ENCODE measurements at regions of chr12 and their contacts with region 1.

Region 1: DNA sequence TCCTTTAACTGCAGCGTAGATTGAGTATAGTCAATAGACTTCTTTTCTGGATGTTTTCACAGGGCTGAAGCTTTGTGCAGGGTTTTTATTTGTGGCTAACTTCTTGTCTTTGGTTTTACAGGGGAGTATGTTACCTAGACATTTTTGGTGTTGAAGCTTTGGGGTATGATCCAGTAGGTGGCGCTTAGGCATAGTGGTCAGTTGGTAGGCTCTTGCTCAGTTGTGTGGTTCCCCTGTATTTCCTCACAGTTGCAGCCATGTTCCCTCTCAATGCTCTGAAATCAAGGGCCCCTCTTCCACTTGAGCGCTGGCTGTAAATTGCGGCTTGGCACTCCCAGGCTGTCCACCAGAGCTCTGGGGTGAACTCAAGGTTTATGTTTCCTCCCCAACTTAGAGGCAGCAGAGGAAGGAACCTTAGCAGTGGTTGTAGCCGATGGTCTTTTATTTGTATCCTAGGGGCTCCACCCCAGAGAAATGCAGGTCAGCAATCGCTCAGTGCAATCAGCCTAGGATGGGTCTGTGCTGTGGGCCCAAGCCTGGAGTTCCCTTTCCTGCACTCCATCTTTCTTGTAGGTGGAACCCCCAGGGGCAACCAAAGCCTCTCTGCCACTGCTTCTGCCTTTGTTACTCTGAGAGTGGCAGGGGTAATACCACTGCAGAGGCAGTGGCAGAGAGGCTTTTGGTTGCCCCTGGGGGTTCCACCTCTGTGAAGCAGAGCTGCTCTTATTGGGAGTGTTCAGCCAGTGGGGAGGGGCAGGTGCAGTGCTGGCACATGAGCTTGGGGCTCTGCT is 55.1 kb downstream of the CMAS start:
- DNase-seq: peak in 9 of 14 experiments; percentile 10 to 76 (median 33)
- ATAC-seq: peak; percentile 48
- H3K4me3 ChIP-seq: no peak overlapping the region
- H3K4me3 Mint-ChIP-seq: no peak overlapping the region
- H3K27ac ChIP-seq: no peak overlapping the region
- H3K27ac Mint-ChIP-seq: no peak overlapping the region
- H3K4me1 ChIP-seq: peaks cover 15% of the 10 kb centered on the region
- H3K4me1 Mint-ChIP-seq: peaks cover 14% of the 10 kb centered on the region
- H3K27me3 ChIP-seq: no peaks in the 10 kb centered on the region
- H3K27me3 Mint-ChIP-seq: no peaks in the 10 kb centered on the region
- CTCF ChIP-seq: peak; percentile 66

Region 2: GRCh38 chr12:22164139-22164538 is 63.0 kb after region 1 on chr12:
- CTCF ChIA-PET with region 1: no interaction called
- POLR2A ChIA-PET with region 1: no interaction called
- intact Hi-C with region 1: loop called (anchors 5 to 10 kb)
- DNase-seq: peak in 4 of 14 experiments; percentile 30 to 71 (median 46)
- ATAC-seq: peak; percentile 66
- H3K4me3 ChIP-seq: peak overlapping the region; percentile 6
- H3K4me3 Mint-ChIP-seq: peak overlapping the region; percentile 57
- H3K27ac ChIP-seq: peak overlapping the region; percentile 5 to 57
- H3K27ac Mint-ChIP-seq: peak overlapping the region; percentile 78
- H3K4me1 ChIP-seq: peaks cover 23% of the 10 kb centered on the region
- H3K4me1 Mint-ChIP-seq: peaks cover 64% of the 10 kb centered on the region
- H3K27me3 ChIP-seq: no peaks in the 10 kb centered on the region
- H3K27me3 Mint-ChIP-seq: no peaks in the 10 kb centered on the region
- CTCF ChIP-seq: no peak

Region 3: GRCh38 chr12:22173177-22173576 is 72.0 kb after region 1 on chr12:
- CTCF ChIA-PET with region 1: no interaction called
- POLR2A ChIA-PET with region 1: no interaction called
- intact Hi-C with region 1: loop called (anchors 5 to 10 kb)
- DNase-seq: peak in 2 of 14 experiments; percentile 15 to 17
- ATAC-seq: no peak
- H3K4me3 ChIP-seq: no peak overlapping the region
- H3K4me3 Mint-ChIP-seq: no peak overlapping the region
- H3K27ac ChIP-seq: no peak overlapping the region
- H3K27ac Mint-ChIP-seq: no peak overlapping the region
- H3K4me1 ChIP-seq: no peaks in the 10 kb centered on the region
- H3K4me1 Mint-ChIP-seq: peaks cover 10% of the 10 kb centered on the region
- H3K27me3 ChIP-seq: no peaks in the 10 kb centered on the region
- H3K27me3 Mint-ChIP-seq: no peaks in the 10 kb centered on the region
- CTCF ChIP-seq: no peak

Region 4: DNA sequence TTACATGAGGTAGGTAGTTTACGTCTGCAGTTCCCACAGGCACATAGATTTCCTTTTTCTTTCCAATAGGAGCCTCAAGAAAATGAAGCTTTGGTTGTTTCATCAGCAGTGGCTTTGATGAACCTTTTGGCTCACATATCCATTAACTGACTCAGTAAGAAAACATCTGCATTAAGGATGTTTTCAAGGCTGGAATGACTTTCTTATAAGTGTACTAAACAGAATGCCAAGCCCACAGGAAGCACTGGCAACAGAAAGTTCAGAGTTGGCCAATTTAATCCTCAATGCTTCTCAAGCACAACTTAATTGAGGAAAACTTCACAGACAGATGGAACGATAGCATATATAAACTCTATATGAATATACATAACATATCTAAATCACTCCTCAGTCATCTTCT is 169.9 kb after region 1 on chr12:
- CTCF ChIA-PET with region 1: no interaction called
- POLR2A ChIA-PET with region 1: no interaction called
- intact Hi-C with region 1: no loop called
- DNase-seq: no peak
- ATAC-seq: no peak
- H3K4me3 ChIP-seq: no peak overlapping the region
- H3K4me3 Mint-ChIP-seq: no peak overlapping the region
- H3K27ac ChIP-seq: no peak overlapping the region
- H3K27ac Mint-ChIP-seq: no peak overlapping the region
- H3K4me1 ChIP-seq: no peaks in the 10 kb centered on the region
- H3K4me1 Mint-ChIP-seq: peaks cover 5% of the 10 kb centered on the region
- H3K27me3 ChIP-seq: no peaks in the 10 kb centered on the region
- H3K27me3 Mint-ChIP-seq: no peaks in the 10 kb centered on the region
- CTCF ChIP-seq: no peak

Measured in CD4-positive, alpha-beta T cell (primary cell).